ENCODE measurements at regions of chr17 and their contacts with region 1.

Region 1: GRCh38 chr17:43211480-43212402 is at the start of gene TMEM106A:
- DNase-seq: peak; percentile 78 to 81
- ATAC-seq: peak; percentile 88 to 96 (median 94)
- H3K4me3 ChIP-seq: peak within 1 kb of the TSS; percentile 42 to 72 (median 68)
- H3K27ac ChIP-seq: peak within 1 kb of the TSS; percentile 64 to 90 (median 83)
- H3K4me1 ChIP-seq: peaks cover 0 to 33% (median 20%) of the 10 kb centered on the region in 9 donors
- H3K27me3 ChIP-seq: no peaks in the 10 kb centered on the region
- CTCF ChIP-seq: peak in 7 of 9 donors; percentile 15 to 52 (median 39)
- total RNA-seq, gene TMEM106A: 1.9 to 10.4 (median 2.7) TPM

Region 2: GRCh38 chr17:43175816-43176570 is 35.7 kb before region 1 on chr17:
- intact Hi-C with region 1: loop called in 1 of 10 experiments (anchors 5 kb)
- DNase-seq: no peak
- ATAC-seq: no peak
- H3K4me3 ChIP-seq: peak overlapping the region in 2 of 10 donors; percentile 2 to 3
- H3K27ac ChIP-seq: peak overlapping the region in 8 of 10 donors; percentile 17 to 58 (median 44)
- H3K4me1 ChIP-seq: peaks cover 5 to 70% (median 52%) of the 10 kb centered on the region in 9 donors
- H3K27me3 ChIP-seq: no peaks in the 10 kb centered on the region
- CTCF ChIP-seq: no peak

Region 3: DNA sequence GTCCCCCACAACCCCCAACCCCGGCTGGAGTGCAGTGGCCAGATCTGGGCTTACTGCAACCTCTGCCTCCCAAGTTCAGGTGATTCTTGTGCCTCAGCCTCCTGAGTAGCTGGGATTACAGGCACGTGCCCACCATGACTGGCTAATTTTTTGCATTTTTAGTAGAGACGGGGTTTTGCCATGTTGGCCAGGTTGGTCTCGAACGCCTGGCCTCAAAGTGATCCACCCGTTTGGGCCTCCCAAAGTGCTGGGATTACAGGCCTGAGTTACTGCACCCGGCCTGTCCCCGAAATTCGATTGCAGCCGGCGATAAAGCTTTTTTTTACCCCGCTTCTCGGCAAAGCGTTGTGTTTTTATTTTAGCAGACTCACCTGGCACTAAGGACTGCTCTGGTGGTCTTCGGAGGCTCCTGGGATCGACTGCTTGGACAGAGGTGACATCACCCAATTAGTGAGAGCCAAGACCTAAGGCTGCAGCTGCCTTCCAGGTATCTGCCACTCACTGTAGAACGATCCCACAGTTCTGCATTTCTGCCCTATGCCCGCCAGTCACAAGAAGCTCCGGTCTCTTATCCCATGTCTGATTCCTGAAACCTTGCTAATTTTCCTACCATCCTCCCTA is 104.9 kb after region 1 on chr17:
- intact Hi-C with region 1: loop called in 1 of 10 experiments (anchors 10 kb)
- DNase-seq: no peak
- ATAC-seq: no peak
- H3K4me3 ChIP-seq: no peak overlapping the region
- H3K27ac ChIP-seq: no peak overlapping the region
- H3K4me1 ChIP-seq: no peaks in the 10 kb centered on the region
- H3K27me3 ChIP-seq: no peaks in the 10 kb centered on the region
- CTCF ChIP-seq: no peak

Region 4: DNA sequence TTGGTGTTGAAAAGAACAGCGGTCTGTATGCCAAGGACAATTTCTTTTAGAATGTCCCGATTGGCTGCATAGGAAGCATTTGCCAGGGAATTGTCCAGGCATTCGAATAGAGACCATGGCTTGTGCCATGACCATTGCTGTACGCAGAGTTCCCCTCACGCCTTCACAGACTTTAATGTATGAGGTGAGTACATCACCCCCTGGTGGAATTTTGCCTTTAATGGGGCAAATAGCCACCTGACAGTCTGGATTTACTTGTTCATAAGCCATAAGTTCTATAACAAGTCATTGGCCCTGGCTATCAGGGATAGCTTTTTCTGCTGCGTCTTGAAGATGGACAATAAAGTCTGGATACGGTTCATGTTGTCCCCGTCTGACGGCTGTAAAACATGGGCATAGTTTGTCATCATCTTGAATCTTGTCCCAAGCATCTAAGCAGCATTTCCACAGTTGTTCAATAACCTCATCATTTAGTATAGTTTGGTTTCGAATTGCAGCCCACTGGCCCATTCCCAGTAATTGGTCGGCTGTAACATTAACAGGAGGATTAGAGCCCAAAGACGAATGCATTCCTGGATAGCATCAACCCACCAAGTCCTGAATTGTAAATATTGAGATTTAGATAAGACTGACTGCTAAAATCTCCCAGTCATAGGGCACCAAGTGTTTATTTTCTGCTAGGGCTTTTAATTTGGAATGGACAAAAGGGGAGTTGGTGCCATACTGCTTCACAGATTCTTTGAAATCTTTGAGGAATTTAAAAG is 119.3 kb after region 1 on chr17:
- intact Hi-C with region 1: loop called in 1 of 10 experiments (anchors 5 kb)
- DNase-seq: no peak
- ATAC-seq: no peak
- H3K4me3 ChIP-seq: no peak overlapping the region
- H3K27ac ChIP-seq: no peak overlapping the region
- H3K4me1 ChIP-seq: peaks cover 0 to 12% (median 9%) of the 10 kb centered on the region in 9 donors
- H3K27me3 ChIP-seq: no peaks in the 10 kb centered on the region
- CTCF ChIP-seq: no peak